Posterior vena cava (tissue), 2 donors: ENCODE measurements at regions of chr5 and their contacts with region 1.

Region 1: DNA sequence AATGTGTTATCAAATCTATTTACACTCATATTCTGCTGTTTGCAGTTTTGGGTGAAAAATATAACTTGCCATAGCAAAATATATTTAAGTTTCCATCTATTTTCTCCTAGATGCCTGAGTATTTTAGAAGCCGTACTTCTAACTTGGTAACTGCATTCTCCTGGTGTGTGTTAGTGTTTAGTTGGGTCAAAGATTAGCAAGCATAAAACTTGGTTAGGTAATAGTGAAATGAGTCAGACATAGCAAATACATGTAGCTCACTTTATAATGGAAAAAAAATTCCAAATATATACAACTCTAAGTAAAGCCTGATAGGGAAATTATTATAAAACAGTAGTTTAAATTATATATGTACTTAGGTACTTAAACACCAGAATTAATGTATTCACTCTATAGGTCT is 640.7 kb upstream of the ST8SIA4 start:
- DNase-seq: no peak

Region 2: DNA sequence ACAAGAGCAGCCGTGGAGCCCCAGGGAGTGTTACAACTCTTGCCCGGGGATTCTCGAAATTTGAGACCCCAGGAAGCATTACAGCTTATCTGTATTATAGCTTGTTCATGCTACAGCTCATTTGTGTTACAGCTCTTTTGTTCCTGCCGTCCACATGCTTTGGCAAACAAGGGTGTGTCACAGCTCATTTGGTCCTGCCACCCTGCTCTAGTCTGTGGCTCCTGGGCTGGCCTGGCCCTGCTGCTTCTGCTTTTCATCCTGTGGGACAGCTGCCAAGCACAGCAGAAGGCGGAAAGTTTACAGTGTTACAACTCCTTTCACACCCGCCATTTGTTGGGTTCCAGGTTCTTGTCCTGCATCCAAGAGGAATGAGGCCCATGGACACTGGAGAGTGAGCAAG is 67.3 kb after region 1 on chr5:
- intact Hi-C with region 1: loop called in 1 of 2 experiments (anchors 2 kb)
- DNase-seq: no peak